Activated B cell treated with CpG ODN at 0.5 μM for 24 hours (primary cell): ENCODE measurements at regions of chr18 and their contacts with region 1.

Region 1: GRCh38 chr18:10453806-10454673 is at the start of gene APCDD1:
- DNase-seq: peak; percentile 31
- ATAC-seq: peak; percentile 76
- H3K4me3 Mint-ChIP-seq: peak within 1 kb of the TSS; percentile 79
- H3K27ac Mint-ChIP-seq: no peak within 1 kb of the TSS
- H3K4me1 Mint-ChIP-seq: peaks cover 28% of the 10 kb centered on the region
- H3K27me3 Mint-ChIP-seq: peaks cover 32% of the 10 kb centered on the region
- CTCF ChIP-seq: no peak
- total RNA-seq, gene APCDD1: 0.15 and 0.38 TPM in 2 replicates

Region 2: DNA sequence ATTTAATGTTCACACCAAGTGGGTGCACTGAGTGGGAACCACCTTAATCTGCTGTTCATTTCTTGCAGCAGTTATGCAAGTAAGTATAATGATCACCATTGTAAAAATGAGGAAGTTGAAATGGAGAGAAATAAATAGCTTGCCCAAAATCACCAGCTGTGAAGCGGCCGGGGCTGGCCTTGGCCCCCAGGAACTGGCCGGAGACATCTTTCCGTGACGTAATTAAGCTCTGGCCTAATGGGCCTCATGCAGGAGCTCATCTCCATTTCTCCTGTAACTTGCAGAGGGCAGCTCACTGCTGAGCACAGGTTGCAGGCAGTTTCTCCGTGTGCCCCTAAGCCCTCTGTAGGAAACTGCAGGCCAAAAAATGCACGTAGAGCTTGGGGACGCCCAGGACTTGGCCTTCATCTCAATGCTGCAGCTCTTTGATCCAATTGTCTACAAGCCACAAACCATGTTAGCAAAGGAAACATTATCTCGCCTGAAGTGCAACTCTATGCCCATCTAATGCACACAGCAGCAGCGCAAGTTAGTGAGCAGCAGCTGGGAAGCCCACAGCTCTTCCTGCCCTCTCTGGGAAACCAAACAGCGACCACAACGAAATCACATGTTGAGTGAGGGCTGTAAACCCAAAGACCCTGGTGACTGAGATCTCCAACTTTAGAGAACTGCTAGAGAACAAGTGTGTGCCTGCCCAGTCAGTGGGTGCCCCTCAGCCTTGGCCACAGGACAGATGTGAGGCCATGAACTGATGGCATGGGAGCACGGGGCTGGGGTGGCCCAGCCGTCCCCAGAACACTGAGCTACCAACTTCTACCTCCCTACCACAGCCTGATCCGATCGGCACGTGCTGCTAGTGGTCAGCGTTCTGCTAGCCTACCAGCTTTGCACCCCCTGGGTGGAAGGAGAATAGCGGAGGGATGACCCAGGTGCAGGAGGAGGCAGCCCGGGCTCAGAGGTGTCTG is 29.2 kb after region 1 on chr18:
- CTCF ChIA-PET with region 1: no interaction called
- POLR2A ChIA-PET with region 1: no interaction called
- intact Hi-C with region 1: loop called (anchors 2 kb)
- DNase-seq: peak; percentile 37
- ATAC-seq: peak; percentile 79
- H3K4me3 Mint-ChIP-seq: peak overlapping the region; percentile 62
- H3K27ac Mint-ChIP-seq: peak overlapping the region; percentile 82
- H3K4me1 Mint-ChIP-seq: peaks cover 68% of the 10 kb centered on the region
- H3K27me3 Mint-ChIP-seq: no peaks in the 10 kb centered on the region
- CTCF ChIP-seq: no peak

Region 3: GRCh38 chr18:10519999-10520935 is 66.2 kb after region 1 on chr18:
- CTCF ChIA-PET with region 1: no interaction called
- POLR2A ChIA-PET with region 1: no interaction called
- intact Hi-C with region 1: loop called (anchors 2 kb)
- DNase-seq: peak; percentile 37
- ATAC-seq: peak; percentile 94
- H3K4me3 Mint-ChIP-seq: no peak overlapping the region
- H3K27ac Mint-ChIP-seq: no peak overlapping the region
- H3K4me1 Mint-ChIP-seq: peaks cover 13% of the 10 kb centered on the region
- H3K27me3 Mint-ChIP-seq: peaks cover 12% of the 10 kb centered on the region
- CTCF ChIP-seq: no peak

Region 4: DNA sequence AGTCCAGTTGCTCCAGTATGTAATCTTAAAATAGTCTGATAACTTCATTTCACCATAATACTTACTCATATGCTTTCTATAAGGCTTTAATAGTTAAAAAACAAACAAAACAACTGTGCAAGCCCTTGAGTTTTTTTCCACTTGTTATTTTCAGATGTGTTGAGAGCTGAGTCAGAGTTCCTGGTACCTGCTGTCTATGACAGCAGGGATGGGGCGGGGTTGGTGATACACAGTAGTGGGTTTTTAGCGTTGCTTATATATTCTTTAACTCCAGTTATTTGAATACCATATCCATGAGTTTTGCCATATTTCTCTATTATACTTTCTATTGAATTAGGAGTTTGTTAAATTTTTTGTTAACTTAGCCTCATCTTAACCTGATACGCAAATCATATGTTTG is 76.8 kb after region 1 on chr18:
- CTCF ChIA-PET with region 1: no interaction called
- POLR2A ChIA-PET with region 1: no interaction called
- intact Hi-C with region 1: no loop called
- DNase-seq: no peak
- ATAC-seq: no peak
- H3K4me3 Mint-ChIP-seq: no peak overlapping the region
- H3K27ac Mint-ChIP-seq: no peak overlapping the region
- H3K4me1 Mint-ChIP-seq: peaks cover 39% of the 10 kb centered on the region
- H3K27me3 Mint-ChIP-seq: no peaks in the 10 kb centered on the region
- CTCF ChIP-seq: no peak